ENCODE measurements at regions of chr3 and their contacts with region 1.

Region 1: DNA sequence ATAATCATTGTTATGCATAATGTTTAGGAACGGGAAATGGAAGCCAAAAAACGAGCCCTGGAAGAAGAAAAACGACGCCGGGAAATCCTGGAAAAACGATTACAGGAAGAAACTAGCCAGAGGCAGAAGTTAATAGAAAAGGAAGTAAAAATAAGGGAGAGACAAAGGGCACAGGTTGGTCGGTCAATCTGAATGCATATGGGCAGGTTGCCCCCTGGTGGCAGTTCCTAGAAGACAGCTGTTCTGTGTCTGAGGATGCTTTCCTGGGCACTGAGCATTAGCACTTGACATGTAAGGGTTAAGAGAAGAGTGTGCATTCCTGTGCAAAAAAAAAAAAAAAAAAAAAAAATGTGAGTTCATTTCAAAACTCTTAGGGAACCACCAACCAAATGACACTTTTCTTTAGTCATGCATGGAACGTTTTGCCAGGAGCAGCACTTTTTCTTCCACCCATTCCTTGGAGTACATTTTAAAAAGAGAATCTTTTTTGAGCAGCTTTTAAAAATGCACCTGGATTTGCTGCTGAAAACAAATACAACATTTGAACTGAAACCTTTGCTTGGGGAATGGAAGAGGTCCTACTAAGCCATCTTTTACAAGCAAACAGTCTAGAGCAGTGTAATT is 11.1 kb upstream of the ABHD10 start:
- DNase-seq: peak; percentile 57
- H3K4me3 Mint-ChIP-seq: no peak overlapping the region
- H3K27ac Mint-ChIP-seq: no peak overlapping the region
- H3K4me1 Mint-ChIP-seq: peaks cover 29% of the 10 kb centered on the region
- H3K27me3 Mint-ChIP-seq: no peaks in the 10 kb centered on the region

Region 2: DNA sequence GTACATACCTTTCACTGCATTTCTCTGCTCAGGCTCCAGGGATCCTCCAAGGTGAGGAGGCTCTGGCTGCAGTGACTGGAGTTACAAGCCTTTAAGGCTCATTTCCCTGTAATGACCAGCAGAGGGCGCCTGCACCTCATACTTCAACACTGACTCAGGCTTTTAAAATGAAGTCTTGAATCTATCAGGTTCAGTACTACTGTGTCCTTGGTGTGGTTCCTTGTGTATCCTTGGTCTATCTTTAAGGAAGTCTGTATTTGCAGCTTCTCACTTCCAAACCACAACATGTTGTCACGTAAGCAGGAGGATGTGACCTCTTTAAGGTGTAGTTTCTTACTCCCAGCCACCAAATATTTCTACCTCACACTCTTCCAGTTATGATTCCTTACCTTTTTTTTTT is 250.2 kb before region 1 on chr3:
- intact Hi-C with region 1: loop called (anchors 1 kb)
- DNase-seq: peak; percentile 44
- H3K4me3 Mint-ChIP-seq: no peak overlapping the region
- H3K27ac Mint-ChIP-seq: peak overlapping the region; percentile 70
- H3K4me1 Mint-ChIP-seq: peaks cover 8% of the 10 kb centered on the region
- H3K27me3 Mint-ChIP-seq: no peaks in the 10 kb centered on the region

Region 3: DNA sequence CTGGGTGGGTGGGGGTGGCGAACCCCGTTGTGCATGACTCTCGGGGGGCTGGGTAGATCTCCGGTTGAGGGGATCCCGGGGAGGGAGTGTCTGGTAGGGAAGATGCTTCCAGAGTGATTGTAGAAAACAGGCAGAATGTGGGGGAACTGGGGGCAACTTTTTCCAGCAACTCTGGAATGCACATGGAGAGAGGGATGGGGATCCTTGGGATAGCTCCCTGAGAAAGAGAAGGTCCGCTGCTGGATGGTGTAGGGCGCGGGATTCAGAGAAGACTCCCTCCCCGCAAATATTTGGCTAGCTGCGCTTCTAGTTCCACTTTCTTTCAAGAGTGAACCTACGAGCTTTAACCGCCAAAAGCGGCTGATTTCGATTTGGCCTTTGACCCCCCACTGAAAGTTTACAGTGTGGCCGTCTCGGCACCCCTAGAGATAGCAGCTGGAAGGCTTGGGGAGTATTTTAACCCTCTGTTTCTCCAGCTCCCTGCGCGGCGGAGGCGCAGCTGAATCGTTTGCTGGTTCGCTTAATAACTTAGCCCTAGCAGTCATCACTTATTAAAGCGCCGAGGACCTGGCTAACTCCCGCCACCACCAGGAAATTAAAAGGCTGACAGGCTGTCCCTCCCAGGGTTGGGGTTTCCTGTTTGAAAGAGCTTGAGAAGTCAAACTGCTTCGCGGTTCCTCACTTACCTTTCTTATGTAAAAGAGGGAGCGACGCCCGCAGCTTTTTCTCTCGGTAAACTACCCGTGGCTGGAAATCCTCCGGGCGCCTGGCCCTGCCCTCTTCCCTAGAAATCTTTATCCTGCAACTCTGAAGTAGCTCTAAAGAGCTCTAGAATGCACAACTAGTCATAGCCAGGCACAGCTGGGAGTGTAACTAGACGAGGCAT is 107.5 kb before region 1 on chr3:
- intact Hi-C with region 1: loop called (anchors 2 kb)
- DNase-seq: peak; percentile 27
- H3K4me3 Mint-ChIP-seq: peak overlapping the region; percentile 85
- H3K27ac Mint-ChIP-seq: no peak overlapping the region
- H3K4me1 Mint-ChIP-seq: peaks cover 27% of the 10 kb centered on the region
- H3K27me3 Mint-ChIP-seq: peaks cover 61% of the 10 kb centered on the region

Region 4: DNA sequence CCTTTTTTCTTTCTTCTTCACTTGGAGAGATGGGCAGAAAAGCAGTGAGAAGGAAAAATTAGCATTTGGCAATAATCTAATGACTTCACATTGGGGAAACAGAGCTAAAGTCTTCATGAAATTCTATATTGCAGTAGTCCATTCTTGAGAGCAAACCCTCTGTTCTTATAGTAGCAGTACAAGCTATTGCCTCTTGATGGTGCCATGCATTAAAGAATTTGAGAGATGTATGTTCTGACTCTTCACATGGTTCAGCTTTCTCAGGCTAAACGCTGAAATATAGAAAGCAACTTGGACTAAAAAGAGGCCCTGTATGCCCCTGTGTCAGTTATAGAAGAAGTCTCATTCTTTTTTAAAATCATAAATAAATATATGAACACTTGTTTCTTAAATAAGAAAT is 72.7 kb before region 1 on chr3:
- intact Hi-C with region 1: loop called (anchors 1 kb)
- DNase-seq: no peak
- H3K4me3 Mint-ChIP-seq: no peak overlapping the region
- H3K27ac Mint-ChIP-seq: no peak overlapping the region
- H3K4me1 Mint-ChIP-seq: no peaks in the 10 kb centered on the region
- H3K27me3 Mint-ChIP-seq: no peaks in the 10 kb centered on the region

Region 5: GRCh38 chr3:111998636-111999483 is 31.1 kb after region 1 on chr3 and contains the start of gene TAGLN3:
- intact Hi-C with region 1: loop called (anchors 1 kb)
- DNase-seq: no peak
- H3K4me3 Mint-ChIP-seq: peak within 1 kb of the TSS; percentile 66
- H3K27ac Mint-ChIP-seq: no peak within 1 kb of the TSS
- H3K4me1 Mint-ChIP-seq: peaks cover 51% of the 10 kb centered on the region
- H3K27me3 Mint-ChIP-seq: no peaks in the 10 kb centered on the region
- total RNA-seq, gene TAGLN3: 0.78 and 1.1 TPM in 2 replicates

Region 6: GRCh38 chr3:112020674-112021085 is 52.9 kb after region 1 on chr3:
- intact Hi-C with region 1: no loop called
- DNase-seq: no peak
- H3K4me3 Mint-ChIP-seq: no peak overlapping the region
- H3K27ac Mint-ChIP-seq: no peak overlapping the region
- H3K4me1 Mint-ChIP-seq: peaks cover 10% of the 10 kb centered on the region
- H3K27me3 Mint-ChIP-seq: peaks cover 2% of the 10 kb centered on the region

Region 7: DNA sequence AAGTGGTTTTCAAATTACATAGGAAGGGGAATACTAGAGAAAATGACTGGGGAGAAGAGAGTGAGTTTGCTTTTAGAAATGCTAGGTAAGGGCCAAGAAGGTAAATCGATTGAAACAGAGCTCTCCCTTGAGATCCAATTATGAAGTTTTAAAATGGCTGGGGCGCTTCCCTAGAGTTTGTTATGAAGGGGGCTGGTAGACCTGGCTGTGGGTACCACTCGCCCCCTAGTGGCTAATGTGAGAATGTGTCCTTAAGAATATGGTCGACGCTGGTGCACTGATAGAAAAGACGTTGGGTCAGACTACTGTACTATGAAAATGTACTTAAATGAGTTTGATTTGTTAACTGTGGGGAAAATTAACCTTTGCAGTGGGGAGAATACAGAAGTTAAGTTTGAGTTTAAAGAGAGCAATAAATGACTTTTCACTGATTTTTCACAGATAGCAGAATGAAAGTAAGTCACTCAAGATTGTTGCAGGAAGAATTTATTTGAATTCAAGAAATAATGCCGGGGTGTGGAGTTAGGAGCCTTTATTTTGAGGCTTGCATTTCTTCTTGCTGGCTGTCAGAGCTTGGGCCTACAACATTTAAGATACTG is 75.9 kb after region 1 on chr3:
- intact Hi-C with region 1: loop called (anchors 1 kb)
- DNase-seq: peak; percentile 29
- H3K4me3 Mint-ChIP-seq: no peak overlapping the region
- H3K27ac Mint-ChIP-seq: no peak overlapping the region
- H3K4me1 Mint-ChIP-seq: no peaks in the 10 kb centered on the region
- H3K27me3 Mint-ChIP-seq: no peaks in the 10 kb centered on the region